ENCODE measurements at regions of chr9 and their contacts with region 1.

Region 1: GRCh38 chr9:94213511-94214124 is 45.5 kb upstream of the ZNF169 start:
- DNase-seq: peak; percentile 71
- ATAC-seq: peak; percentile 99
- H3K4me3 ChIP-seq: no peak overlapping the region
- H3K27ac ChIP-seq: no peak overlapping the region
- H3K4me1 ChIP-seq: no peaks in the 10 kb centered on the region
- H3K27me3 ChIP-seq: no peaks in the 10 kb centered on the region
- CTCF ChIP-seq: peak; percentile 61 to 94 (median 80)
- POLR2A ChIP-seq: no peak
- RAD21 ChIP-seq: peak; percentile 98

Region 2: DNA sequence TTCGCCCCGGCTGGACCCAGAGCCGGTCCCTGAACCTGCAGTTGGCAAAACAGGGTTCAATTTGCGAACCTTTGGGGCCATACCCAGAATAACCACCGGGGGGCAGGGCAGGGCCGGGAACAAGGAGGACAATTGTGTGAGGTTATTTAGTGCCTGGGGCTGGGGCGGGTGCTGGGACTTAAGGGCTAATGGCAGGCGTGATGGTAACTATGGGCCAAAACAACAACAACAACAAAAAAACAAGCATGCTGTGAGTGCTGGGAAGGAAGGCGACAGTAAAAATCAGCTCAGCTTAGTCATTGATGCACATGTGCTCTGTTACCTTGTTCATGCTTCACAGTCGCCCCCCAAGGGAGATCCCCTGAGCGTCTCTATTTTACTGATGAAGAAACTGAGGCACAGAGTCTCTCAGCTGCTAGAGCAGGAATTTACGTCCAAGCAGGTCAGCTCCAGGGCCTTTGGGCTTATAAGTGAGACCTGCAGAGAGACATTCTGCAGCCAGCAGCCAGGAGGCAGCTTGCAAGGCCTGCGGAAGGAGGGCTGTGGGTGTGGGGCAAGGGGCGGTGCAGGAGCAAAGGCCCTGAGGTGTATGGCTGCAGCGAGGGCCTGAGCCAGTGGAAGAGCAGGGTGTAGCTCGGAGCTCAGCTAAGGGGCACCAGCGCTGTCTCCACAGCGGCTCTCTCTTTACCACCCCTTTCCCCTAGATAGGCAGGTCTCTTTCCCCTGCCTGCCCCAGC is 531.2 kb before region 1 on chr9:
- CTCF ChIA-PET with region 1: no interaction called
- POLR2A ChIA-PET with region 1: no interaction called
- RAD21 ChIA-PET with region 1: interaction called in 1 of 2 experiments, 3 read pairs
- intact Hi-C with region 1: loop called (anchors 1 kb)
- DNase-seq: peak; percentile 34
- ATAC-seq: peak; percentile 86
- H3K4me3 ChIP-seq: no peak overlapping the region
- H3K27ac ChIP-seq: no peak overlapping the region
- H3K4me1 ChIP-seq: peaks cover 3 to 5% of the 10 kb centered on the region in 2 experiments; a peak in 1 of 4 replicates
- H3K27me3 ChIP-seq: no peaks in the 10 kb centered on the region
- CTCF ChIP-seq: peak; percentile 80 to 88 (median 88)
- POLR2A ChIP-seq: no peak
- RAD21 ChIP-seq: peak; percentile 92

Region 3: DNA sequence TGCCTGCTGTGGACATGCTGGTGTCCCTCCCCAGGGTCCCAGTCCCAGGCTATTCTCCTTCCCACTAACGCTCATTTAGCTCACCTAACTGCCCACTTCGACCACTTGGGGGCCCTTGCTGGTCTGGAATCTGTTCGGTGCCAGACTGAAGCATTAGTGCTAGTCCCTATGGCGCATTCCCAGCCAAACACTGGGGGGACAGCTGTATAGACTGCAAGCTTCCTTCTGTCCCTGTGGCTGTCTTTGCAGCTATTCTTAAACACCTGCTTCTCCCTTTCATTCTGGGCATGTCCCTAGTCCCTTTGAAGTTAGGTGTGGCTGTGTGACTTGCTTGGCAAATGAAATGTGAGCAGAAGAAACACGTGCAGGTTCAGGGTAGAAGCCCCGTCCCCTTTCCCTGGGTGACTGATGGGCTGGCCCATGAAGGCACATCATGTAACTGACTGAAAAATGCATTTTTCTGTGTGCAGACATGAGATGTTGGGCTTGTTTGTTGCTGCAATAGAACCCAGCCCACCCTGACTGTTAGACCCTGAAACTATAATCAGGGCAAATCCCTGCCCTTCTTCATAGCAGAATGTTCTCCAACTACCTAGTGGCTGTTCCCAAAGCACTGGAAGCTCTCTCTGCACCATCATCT is 392.8 kb before region 1 on chr9:
- CTCF ChIA-PET with region 1: interaction called, 7 read pairs
- POLR2A ChIA-PET with region 1: no interaction called
- RAD21 ChIA-PET with region 1: no interaction called
- intact Hi-C with region 1: loop called (anchors 2 kb)
- DNase-seq: no peak
- ATAC-seq: peak; percentile 90
- H3K4me3 ChIP-seq: no peak overlapping the region
- H3K27ac ChIP-seq: no peak overlapping the region
- H3K4me1 ChIP-seq: peaks cover 0 to 12% of the 10 kb centered on the region in 2 experiments; a peak in 2 of 4 replicates
- H3K27me3 ChIP-seq: peaks cover 21% of the 10 kb centered on the region
- CTCF ChIP-seq: peak; percentile 42 to 55 (median 45); a peak in 5 of 6 replicates
- POLR2A ChIP-seq: no peak
- RAD21 ChIP-seq: peak; percentile 45; the same call in 1 of the 2 replicates

Region 4: DNA sequence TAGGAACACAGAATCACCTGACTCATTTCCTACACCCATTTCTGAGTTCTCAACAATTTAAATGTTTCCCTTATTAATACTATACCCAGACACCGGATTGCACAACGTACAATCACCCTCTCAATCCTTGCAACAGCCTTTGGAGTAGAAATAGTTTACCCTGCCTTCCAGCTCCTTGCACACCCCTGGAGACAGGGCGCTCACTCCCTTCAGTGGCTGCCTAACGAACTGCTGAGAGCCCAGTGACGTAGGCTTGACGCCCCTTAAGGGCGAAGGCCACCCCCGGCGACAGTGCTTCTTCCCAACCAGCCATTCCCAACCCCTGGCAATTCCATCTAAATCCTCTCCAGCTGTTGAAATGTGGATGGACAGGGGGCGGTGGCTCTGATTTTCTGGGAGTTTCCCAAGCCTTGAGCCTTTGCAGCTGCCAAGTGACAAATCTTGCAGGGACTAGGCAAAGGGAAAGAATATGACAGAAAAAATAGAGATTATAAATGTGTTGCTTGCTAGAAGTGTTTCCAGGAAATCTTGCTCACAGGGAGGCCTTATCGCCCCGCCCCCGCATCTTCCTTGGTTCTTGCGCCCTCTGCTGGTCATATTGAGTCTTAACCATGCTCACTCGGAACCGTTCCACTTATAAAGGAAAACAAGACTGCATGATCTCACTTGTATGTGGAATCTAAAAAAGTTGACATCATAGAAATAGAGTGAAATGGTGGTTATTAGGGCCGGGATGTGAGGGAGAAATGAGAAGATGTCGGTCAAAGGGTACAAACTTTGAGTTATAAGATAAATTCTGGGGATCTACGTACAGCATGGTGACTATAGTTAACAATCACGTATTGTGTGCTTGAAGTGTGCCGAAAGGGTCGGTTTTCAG is 250.8 kb before region 1 on chr9:
- CTCF ChIA-PET with region 1: interaction called, 4 read pairs
- POLR2A ChIA-PET with region 1: no interaction called
- RAD21 ChIA-PET with region 1: no interaction called
- intact Hi-C with region 1: loop called (anchors 2 kb)
- DNase-seq: peak; percentile 70
- ATAC-seq: peak; percentile 90
- H3K4me3 ChIP-seq: no peak overlapping the region
- H3K27ac ChIP-seq: no peak overlapping the region
- H3K4me1 ChIP-seq: peaks cover 0 to 6% of the 10 kb centered on the region in 2 experiments; a peak in 1 of 4 replicates
- H3K27me3 ChIP-seq: no peaks in the 10 kb centered on the region
- CTCF ChIP-seq: peak; percentile 68 to 90 (median 89)
- POLR2A ChIP-seq: no peak
- RAD21 ChIP-seq: peak; percentile 85

Region 5: DNA sequence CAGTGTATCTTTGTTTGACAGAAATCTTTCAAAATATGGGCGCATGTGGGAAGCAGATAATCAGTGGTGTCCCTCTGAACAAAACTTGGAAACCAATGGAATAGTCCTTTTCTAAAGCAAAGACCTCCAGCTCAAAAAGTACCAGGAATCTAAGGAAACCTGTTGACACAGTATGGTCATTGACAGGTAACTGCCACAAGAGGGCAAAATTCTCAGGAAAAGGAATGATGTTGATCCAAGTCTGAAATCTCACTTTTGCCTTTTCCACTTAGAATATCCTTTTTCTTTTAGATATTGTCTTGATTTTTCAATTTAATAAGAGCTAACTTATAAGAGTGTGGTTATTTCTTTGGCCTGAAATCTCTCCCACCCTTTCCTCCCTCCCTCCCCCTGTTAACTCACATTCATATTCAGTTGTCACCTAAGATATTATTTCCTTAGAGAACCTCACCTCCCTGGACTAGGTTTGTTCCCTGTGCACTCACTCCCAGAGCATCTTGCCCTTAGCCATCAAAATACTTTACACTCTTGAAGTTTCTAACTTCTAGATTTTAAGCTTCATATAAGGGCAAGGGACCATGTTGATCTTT is 199.5 kb before region 1 on chr9:
- CTCF ChIA-PET with region 1: interaction called, 133 read pairs
- POLR2A ChIA-PET with region 1: interaction called, 4 read pairs
- RAD21 ChIA-PET with region 1: interaction called, 15 to 16 read pairs
- intact Hi-C with region 1: loop called (anchors 1 kb)
- DNase-seq: no peak
- ATAC-seq: peak; percentile 79
- H3K4me3 ChIP-seq: no peak overlapping the region
- H3K27ac ChIP-seq: no peak overlapping the region
- H3K4me1 ChIP-seq: peaks cover 5 to 9% of the 10 kb centered on the region in 2 experiments; a peak in 3 of 4 replicates
- H3K27me3 ChIP-seq: no peaks in the 10 kb centered on the region
- CTCF ChIP-seq: peak; percentile 50 to 76 (median 69); a peak in 5 of 6 replicates
- POLR2A ChIP-seq: no peak
- RAD21 ChIP-seq: peak; percentile 62

Region 6: GRCh38 chr9:94065535-94065961 is 148.1 kb before region 1 on chr9:
- CTCF ChIA-PET with region 1: interaction called, 56 read pairs
- POLR2A ChIA-PET with region 1: no interaction called
- RAD21 ChIA-PET with region 1: interaction called, 5 read pairs
- intact Hi-C with region 1: loop called (anchors 1 kb)
- DNase-seq: peak; percentile 76
- ATAC-seq: peak; percentile 96
- H3K4me3 ChIP-seq: no peak overlapping the region
- H3K27ac ChIP-seq: no peak overlapping the region
- H3K4me1 ChIP-seq: peaks cover 0 to 4% of the 10 kb centered on the region in 2 experiments; a peak in 1 of 4 replicates
- H3K27me3 ChIP-seq: no peaks in the 10 kb centered on the region
- CTCF ChIP-seq: peak; percentile 72 to 94 (median 83); a peak in 5 of 6 replicates
- POLR2A ChIP-seq: no peak
- RAD21 ChIP-seq: peak; percentile 87

Region 7: DNA sequence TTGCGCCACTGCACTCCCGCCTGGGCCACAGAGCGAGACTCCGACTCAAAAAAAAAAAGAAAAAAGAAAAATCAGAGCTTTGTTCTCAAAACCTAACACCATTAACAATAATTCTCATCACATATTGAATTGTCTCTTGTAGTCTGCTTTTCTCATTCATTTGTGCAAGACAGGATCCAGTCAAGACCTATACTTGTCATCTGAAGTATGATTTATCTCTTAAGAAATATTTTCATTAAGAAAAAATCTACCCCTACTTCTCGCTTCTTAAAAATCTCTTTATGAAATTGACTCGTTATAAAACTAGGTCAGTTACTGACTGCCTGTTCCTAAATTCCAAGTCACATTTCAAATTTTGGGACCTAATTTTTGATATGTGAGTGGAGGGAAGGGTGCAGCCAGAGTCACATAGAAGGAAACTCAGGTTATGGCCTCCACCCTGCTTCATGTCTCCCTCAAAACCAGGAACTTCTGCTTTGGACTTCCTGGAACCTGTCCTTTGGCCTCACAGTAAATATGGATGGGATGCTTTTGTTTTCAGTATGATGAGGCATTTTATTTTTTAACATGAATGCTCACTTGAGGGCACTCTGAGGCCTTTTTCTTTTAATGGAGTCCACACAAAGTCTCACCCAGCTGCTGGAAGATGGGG is 64.4 kb after region 1 on chr9:
- CTCF ChIA-PET with region 1: no interaction called
- POLR2A ChIA-PET with region 1: no interaction called
- RAD21 ChIA-PET with region 1: no interaction called
- intact Hi-C with region 1: no loop called
- DNase-seq: no peak
- ATAC-seq: no peak
- H3K4me3 ChIP-seq: no peak overlapping the region
- H3K27ac ChIP-seq: no peak overlapping the region
- H3K4me1 ChIP-seq: no peaks in the 10 kb centered on the region
- H3K27me3 ChIP-seq: no peaks in the 10 kb centered on the region
- CTCF ChIP-seq: no peak
- POLR2A ChIP-seq: no peak
- RAD21 ChIP-seq: no peak

Measured in HCT116 (cell line).